Dendritic cell treated with granulocyte-macrophage colony-stimulating factor and Interleukin-4, amounts not matched to agents 40 ng/mL and 50 ng/mL, for 4 days (primary cell): ENCODE measurements at regions of chr11 and their contacts with region 1.

Region 1: DNA sequence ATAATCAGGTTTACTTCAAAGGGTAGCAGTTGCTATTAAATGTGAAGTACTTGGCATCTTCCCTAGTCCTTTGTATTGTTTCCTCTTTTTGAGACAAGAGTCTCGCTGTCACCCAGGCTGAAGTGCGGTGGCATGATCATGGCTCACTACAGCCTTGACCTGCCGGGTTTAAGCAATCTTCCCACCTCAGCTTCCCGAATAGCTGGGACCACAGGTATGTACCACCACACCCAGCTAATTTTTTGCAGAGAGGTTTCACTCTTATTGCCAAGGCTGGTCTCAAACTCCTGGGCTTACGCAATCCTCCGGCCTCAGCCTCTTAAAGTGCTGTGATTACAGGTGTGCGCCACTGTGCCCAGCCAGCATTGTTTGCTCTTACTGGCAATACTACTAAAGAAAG is 36.2 kb upstream of the RAPSN start:
- H3K4me3 Mint-ChIP-seq: no peak overlapping the region
- H3K27ac Mint-ChIP-seq: no peak overlapping the region
- H3K4me1 Mint-ChIP-seq: peaks cover 27% of the 10 kb centered on the region
- H3K27me3 Mint-ChIP-seq: no peaks in the 10 kb centered on the region

Region 2: GRCh38 chr11:47616726-47617416 is 131.8 kb after region 1 on chr11:
- intact Hi-C with region 1: loop called (anchors 5 kb)
- H3K4me3 Mint-ChIP-seq: no peak overlapping the region
- H3K27ac Mint-ChIP-seq: no peak overlapping the region
- H3K4me1 Mint-ChIP-seq: peaks cover 13% of the 10 kb centered on the region
- H3K27me3 Mint-ChIP-seq: no peaks in the 10 kb centered on the region